ENCODE measurements at regions of chr17 and their contacts with region 1.

Region 1: DNA sequence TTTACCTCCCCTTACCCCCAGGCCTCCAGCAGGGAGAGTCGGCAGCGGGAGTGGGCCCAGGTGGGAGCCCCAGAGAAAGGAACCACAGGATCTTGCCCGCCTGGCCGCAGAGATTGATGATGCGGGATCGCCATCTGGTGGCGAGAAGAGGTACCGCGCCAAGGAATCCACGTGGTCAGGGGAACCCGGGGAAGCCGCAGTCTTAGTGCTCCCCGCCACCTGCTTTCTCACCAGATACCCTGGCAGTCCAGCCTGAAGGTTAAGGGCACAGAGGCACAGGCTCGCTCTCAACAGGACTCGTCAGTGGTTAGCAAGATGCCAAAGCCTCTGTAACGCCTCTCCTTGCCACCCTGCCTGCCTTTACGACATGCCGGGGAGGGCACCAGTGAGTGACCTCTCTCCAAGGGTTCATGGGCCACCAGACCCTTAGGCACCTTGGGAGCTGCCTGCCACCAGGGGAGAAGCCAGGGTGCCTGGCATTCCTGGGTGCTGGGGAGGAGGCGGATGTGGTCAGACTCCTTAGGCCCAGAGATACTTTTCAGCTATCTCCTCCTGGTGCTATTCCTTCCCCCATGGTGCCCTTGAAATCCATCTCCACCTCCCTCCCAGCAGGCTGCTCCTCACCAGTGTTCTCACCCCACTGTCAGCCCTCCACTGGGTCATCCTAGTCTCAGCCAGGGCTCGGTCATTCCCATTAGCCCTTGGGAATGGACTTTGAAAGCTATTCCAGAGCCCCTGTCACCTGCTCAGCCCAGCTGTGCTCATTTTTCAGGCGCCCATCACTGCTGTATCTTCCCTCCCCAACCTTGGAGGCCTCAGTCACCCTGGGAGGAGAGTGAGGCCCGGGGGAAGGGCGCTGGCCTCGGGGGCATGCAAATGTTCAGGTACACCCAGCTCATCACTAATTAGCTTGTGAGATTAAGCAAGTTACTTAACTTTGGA is 5.5 kb upstream of the RHBDF2 start:
- DNase-seq: peak; percentile 83 to 87
- ATAC-seq: peak; percentile 73 to 91 (median 79)
- H3K4me3 ChIP-seq: no peak overlapping the region
- H3K27ac ChIP-seq: no peak overlapping the region
- H3K4me1 ChIP-seq: peaks cover 2 to 40% (median 7%) of the 10 kb centered on the region in 9 donors
- H3K27me3 ChIP-seq: peaks cover 0 to 9% (median 0%) of the 10 kb centered on the region in 7 donors
- CTCF ChIP-seq: peak; percentile 81 to 98 (median 94)

Region 2: GRCh38 chr17:76467366-76467765 is 39.3 kb before region 1 on chr17 and contains the start of gene AANAT:
- intact Hi-C with region 1: loop called (anchors 1 to 2 kb)
- DNase-seq: no peak
- ATAC-seq: no peak
- H3K4me3 ChIP-seq: no peak within 1 kb of the TSS
- H3K27ac ChIP-seq: no peak within 1 kb of the TSS
- H3K4me1 ChIP-seq: peaks cover 0 to 18% (median 7%) of the 10 kb centered on the region in 9 donors
- H3K27me3 ChIP-seq: no peaks in the 10 kb centered on the region
- CTCF ChIP-seq: no peak
- total RNA-seq, gene AANAT: 0.98 TPM in 1 of 10 donors, not detected in the others

Region 3: GRCh38 chr17:76585818-76586593 is 79.3 kb after region 1 on chr17 and contains the start of gene ST6GALNAC2:
- intact Hi-C with region 1: no loop called
- DNase-seq: peak; percentile 45 to 69
- ATAC-seq: peak; percentile 90 to 95 (median 94)
- H3K4me3 ChIP-seq: peak within 1 kb of the TSS; percentile 56 to 73 (median 65)
- H3K27ac ChIP-seq: peak within 1 kb of the TSS in 9 of 10 donors; percentile 5 to 82 (median 53)
- H3K4me1 ChIP-seq: peaks cover 3 to 26% (median 21%) of the 10 kb centered on the region in 9 donors
- H3K27me3 ChIP-seq: peaks cover 0 to 57% (median 15%) of the 10 kb centered on the region in 7 donors
- CTCF ChIP-seq: peak in 8 of 9 donors; percentile 20 to 65 (median 44)
- total RNA-seq, gene ST6GALNAC2: 3.7 to 8.4 (median 6.1) TPM

Measured in heart right ventricle (tissue), 16 donors.